GM12878 (cell line): ENCODE measurements at regions of chr13 and their contacts with region 1.

Region 1: DNA sequence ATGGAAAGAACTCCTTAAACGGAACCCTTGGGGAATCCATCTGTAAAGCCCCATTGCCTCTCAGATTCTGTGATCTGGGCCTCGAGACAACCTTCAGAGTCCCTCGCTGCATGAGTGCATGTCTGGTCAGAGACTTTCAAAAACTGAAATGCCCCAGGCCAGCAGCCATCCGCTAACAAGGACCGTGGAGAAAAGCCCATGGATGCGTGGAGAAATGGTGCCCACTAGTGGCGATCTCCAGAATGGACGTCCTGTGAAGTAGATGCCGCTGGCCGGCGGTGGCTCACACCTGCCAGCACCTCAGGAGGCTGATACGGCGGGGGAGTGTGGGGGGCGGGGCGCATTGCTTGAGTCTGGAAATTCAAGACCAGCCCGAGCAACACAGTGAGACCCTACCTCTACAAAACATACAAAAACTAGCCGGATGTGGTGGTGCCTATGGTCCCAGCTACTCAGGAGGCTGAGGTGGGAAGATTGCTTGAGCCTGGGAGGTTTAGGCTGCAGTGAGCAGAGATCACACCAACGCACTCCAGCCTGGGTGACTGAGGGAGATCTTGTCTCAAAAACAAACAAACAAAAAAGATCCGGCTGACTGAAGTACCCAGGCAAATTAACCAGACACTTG is 7.9 kb upstream of the CDC16 start:
- DNase-seq: peak; percentile 50
- ATAC-seq: peak; percentile 98
- H3K4me3 ChIP-seq: no peak overlapping the region
- H3K27ac ChIP-seq: no peak overlapping the region
- H3K4me1 ChIP-seq: peaks cover 13% of the 10 kb centered on the region
- H3K27me3 ChIP-seq: 0 out of 4 replicates have a peak, but pooled peaks cover 0 to 8% of the 10 kb centered on the region in 2 experiments
- CTCF ChIP-seq: peak; percentile 97 to 99 (median 98); a peak in 5 of 6 replicates
- EP300 ChIP-seq: no peak
- POLR2A ChIP-seq: no peak
- RAD21 ChIP-seq: peak; percentile 100

Region 2: GRCh38 chr13:113337556-113337955 is 889.3 kb before region 1 on chr13:
- CTCF ChIA-PET with region 1: no interaction called
- POLR2A ChIA-PET with region 1: no interaction called
- RAD21 ChIA-PET with region 1: no interaction called
- SMC1A ChIA-PET with region 1: no interaction called
- in situ Hi-C with region 1: no loop called
- intact Hi-C with region 1: no loop called
- DNase-seq: no peak
- ATAC-seq: no peak
- H3K4me3 ChIP-seq: no peak overlapping the region
- H3K27ac ChIP-seq: no peak overlapping the region
- H3K4me1 ChIP-seq: no peaks in the 10 kb centered on the region
- H3K27me3 ChIP-seq: no peaks in the 10 kb centered on the region
- CTCF ChIP-seq: no peak
- EP300 ChIP-seq: no peak
- POLR2A ChIP-seq: no peak
- RAD21 ChIP-seq: no peak

Region 3: GRCh38 chr13:113816946-113817859 is 409.6 kb before region 1 on chr13:
- CTCF ChIA-PET with region 1: interaction called, 3 read pairs
- POLR2A ChIA-PET with region 1: no interaction called
- RAD21 ChIA-PET with region 1: interaction called, 3 read pairs
- SMC1A ChIA-PET with region 1: interaction called, 3 read pairs
- in situ Hi-C with region 1: no loop called
- intact Hi-C with region 1: loop called (anchors 1 kb)
- DNase-seq: no peak
- ATAC-seq: peak; percentile 93
- H3K4me3 ChIP-seq: no peak overlapping the region
- H3K27ac ChIP-seq: no peak overlapping the region
- H3K4me1 ChIP-seq: no peaks in the 10 kb centered on the region
- H3K27me3 ChIP-seq: no peaks in the 10 kb centered on the region
- CTCF ChIP-seq: peak; percentile 69 to 85 (median 81)
- EP300 ChIP-seq: no peak
- POLR2A ChIP-seq: no peak
- RAD21 ChIP-seq: peak; percentile 75

Region 4: GRCh38 chr13:113951246-113951999 is 275.4 kb before region 1 on chr13:
- CTCF ChIA-PET with region 1: no interaction called
- POLR2A ChIA-PET with region 1: no interaction called
- RAD21 ChIA-PET with region 1: no interaction called
- SMC1A ChIA-PET with region 1: no interaction called
- in situ Hi-C with region 1: loop called (anchors 5 kb)
- intact Hi-C with region 1: loop called (anchors 1 kb)
- DNase-seq: no peak
- ATAC-seq: peak; percentile 92
- H3K4me3 ChIP-seq: no peak overlapping the region
- H3K27ac ChIP-seq: no peak overlapping the region
- H3K4me1 ChIP-seq: no peaks in the 10 kb centered on the region
- H3K27me3 ChIP-seq: no peaks in the 10 kb centered on the region
- CTCF ChIP-seq: peak; percentile 48 to 70 (median 53); a peak in 4 of 6 replicates
- EP300 ChIP-seq: no peak
- POLR2A ChIP-seq: no peak
- RAD21 ChIP-seq: peak; percentile 88

Region 5: DNA sequence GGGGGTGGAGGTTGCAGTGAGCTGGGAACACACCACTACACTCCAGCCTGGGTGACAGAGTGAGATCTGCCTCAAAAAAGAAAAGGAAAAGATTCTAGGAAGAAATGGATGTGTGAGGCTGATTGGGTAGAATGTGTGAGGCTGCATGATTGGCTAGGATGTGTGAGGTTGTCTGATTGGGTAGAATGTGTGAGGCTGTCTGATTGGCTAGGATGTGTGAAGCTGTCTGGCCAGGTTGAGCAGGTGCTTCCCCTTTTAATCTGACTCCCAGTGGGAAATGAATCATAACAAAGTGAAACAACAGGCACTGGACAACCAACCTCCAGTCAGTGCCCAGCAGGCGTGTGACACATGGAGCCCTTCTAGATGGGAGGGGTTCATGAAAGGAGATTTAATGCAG is 267.6 kb before region 1 on chr13:
- CTCF ChIA-PET with region 1: interaction called, 3 read pairs
- POLR2A ChIA-PET with region 1: no interaction called
- RAD21 ChIA-PET with region 1: no interaction called
- SMC1A ChIA-PET with region 1: no interaction called
- in situ Hi-C with region 1: loop called (anchors 5 kb)
- intact Hi-C with region 1: no loop called
- DNase-seq: no peak
- ATAC-seq: no peak
- H3K4me3 ChIP-seq: no peak overlapping the region
- H3K27ac ChIP-seq: no peak overlapping the region
- H3K4me1 ChIP-seq: no peaks in the 10 kb centered on the region
- H3K27me3 ChIP-seq: no peaks in the 10 kb centered on the region
- CTCF ChIP-seq: no peak
- EP300 ChIP-seq: no peak
- POLR2A ChIP-seq: no peak
- RAD21 ChIP-seq: no peak

Region 6: GRCh38 chr13:114065141-114065925 is 161.5 kb before region 1 on chr13:
- CTCF ChIA-PET with region 1: interaction called, 3 read pairs
- POLR2A ChIA-PET with region 1: no interaction called
- RAD21 ChIA-PET with region 1: interaction called, 6 read pairs
- SMC1A ChIA-PET with region 1: interaction called, 4 read pairs
- in situ Hi-C with region 1: no loop called
- intact Hi-C with region 1: loop called (anchors 5 kb)
- DNase-seq: no peak
- ATAC-seq: peak; percentile 73
- H3K4me3 ChIP-seq: peak overlapping the region; percentile 62
- H3K27ac ChIP-seq: peak overlapping the region; percentile 91
- H3K4me1 ChIP-seq: peaks cover 50% of the 10 kb centered on the region
- H3K27me3 ChIP-seq: no peaks in the 10 kb centered on the region
- CTCF ChIP-seq: no peak
- EP300 ChIP-seq: no peak
- POLR2A ChIP-seq: peak; percentile 71
- RAD21 ChIP-seq: no peak

Region 7: GRCh38 chr13:114143806-114144605 is 82.8 kb before region 1 on chr13:
- CTCF ChIA-PET with region 1: interaction called, 8 read pairs
- POLR2A ChIA-PET with region 1: no interaction called
- RAD21 ChIA-PET with region 1: interaction called, 8 read pairs
- SMC1A ChIA-PET with region 1: interaction called, 4 read pairs
- in situ Hi-C with region 1: no loop called
- intact Hi-C with region 1: loop called (anchors 1 kb)
- DNase-seq: no peak
- ATAC-seq: peak; percentile 91
- H3K4me3 ChIP-seq: no peak overlapping the region
- H3K27ac ChIP-seq: no peak overlapping the region
- H3K4me1 ChIP-seq: peaks cover 52% of the 10 kb centered on the region
- H3K27me3 ChIP-seq: no peaks in the 10 kb centered on the region
- CTCF ChIP-seq: peak; percentile 49 to 70 (median 69)
- EP300 ChIP-seq: no peak
- POLR2A ChIP-seq: no peak
- RAD21 ChIP-seq: peak; percentile 48

Region 8: DNA sequence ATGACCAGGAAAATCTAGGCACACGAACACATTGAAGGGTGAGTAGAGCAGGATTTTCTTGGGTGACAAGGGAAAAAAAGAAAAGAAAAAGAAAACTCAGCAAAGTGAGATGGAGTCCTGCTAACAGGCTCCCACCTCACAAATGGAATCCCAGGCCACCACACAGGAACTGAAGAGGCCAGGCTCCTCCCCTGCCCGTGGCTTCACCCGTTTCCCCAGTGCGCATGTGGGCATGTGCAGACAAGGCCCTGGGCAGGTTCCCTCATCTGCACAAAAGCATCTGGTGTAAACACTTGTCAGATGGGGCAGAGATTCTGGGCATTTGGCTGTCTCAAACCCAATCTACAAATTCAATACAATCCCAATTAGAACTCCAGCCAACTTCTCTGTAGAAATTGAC is 23.3 kb before region 1 on chr13:
- CTCF ChIA-PET with region 1: no interaction called
- POLR2A ChIA-PET with region 1: no interaction called
- RAD21 ChIA-PET with region 1: no interaction called
- SMC1A ChIA-PET with region 1: no interaction called
- in situ Hi-C with region 1: no loop called
- intact Hi-C with region 1: no loop called
- DNase-seq: no peak
- ATAC-seq: no peak
- H3K4me3 ChIP-seq: no peak overlapping the region
- H3K27ac ChIP-seq: no peak overlapping the region
- H3K4me1 ChIP-seq: no peaks in the 10 kb centered on the region
- H3K27me3 ChIP-seq: no peaks in the 10 kb centered on the region
- CTCF ChIP-seq: no peak
- EP300 ChIP-seq: no peak
- POLR2A ChIP-seq: no peak
- RAD21 ChIP-seq: no peak